ENCODE measurements at regions of chr17 and their contacts with region 1.

Region 1: DNA sequence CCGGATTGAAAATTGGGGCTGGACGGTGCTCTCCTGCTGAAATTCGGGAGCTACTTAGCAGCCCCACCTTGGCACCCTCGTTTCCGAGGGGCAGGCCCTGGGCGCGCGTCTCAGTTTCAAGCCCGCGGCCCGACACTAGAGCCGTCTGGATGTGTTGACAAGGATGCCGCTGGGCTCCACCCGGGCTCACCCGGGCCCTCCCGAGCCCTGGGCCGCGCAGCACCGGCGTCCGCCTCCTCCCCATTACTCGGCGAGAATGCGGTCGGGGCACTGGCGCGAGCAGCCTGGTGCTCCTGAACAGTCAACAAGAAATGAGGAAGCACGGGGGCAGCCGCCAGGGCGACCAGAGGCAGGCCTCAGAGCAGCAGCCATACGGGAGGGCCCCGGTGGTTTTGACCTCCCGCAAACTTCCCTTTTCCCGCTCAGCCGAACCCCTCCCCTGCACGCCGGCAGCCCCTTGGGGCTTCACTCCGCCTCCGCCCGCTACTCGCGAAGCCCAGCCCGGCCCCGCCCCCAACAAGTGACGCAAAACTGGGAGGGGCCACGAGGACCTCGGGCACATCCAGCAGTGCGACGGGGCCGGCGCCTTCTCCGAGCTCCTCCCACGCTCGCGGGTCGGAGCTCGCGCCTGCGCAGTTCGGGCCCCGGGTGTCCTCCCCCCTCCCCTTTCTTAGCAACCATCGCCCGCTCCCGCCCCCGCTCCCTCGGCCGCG is 447 bp upstream of the SEC14L1 start:
- DNase-seq: peak; percentile 99
- H3K4me3 Mint-ChIP-seq: peak overlapping the region; percentile 68
- H3K27ac Mint-ChIP-seq: peak overlapping the region; percentile 96
- H3K4me1 Mint-ChIP-seq: peaks cover 49% of the 10 kb centered on the region
- H3K27me3 Mint-ChIP-seq: no peaks in the 10 kb centered on the region

Region 2: GRCh38 chr17:76737082-76737675 is 403.1 kb before region 1 on chr17 and contains the start of gene SRSF2:
- intact Hi-C with region 1: loop called (anchors 2 kb)
- DNase-seq: peak; percentile 100
- H3K4me3 Mint-ChIP-seq: peak within 1 kb of the TSS; percentile 97
- H3K27ac Mint-ChIP-seq: peak within 1 kb of the TSS; percentile 97
- H3K4me1 Mint-ChIP-seq: peaks cover 34% of the 10 kb centered on the region
- H3K27me3 Mint-ChIP-seq: no peaks in the 10 kb centered on the region
- total RNA-seq, gene SRSF2: 456 and 478 TPM in 2 replicates

Region 3: DNA sequence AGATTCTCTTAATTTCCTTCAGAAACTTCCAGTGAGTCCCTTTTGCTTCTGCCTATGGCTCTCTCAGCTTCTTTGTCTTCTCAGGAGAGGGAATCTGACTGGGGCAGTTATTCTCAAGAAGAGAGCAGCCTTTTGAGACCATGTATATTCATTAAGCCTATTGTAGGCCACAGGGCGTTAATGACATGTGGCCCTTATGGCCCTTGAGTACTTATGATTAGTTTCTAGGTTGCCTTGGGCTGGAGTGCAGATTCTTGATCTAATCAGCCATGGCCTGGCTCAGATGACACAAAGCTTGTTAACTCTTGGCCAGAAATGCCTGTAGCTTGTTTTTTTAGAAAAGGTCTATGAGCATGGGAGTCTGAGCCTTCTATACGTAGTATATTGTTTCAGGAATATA is 385.0 kb before region 1 on chr17:
- intact Hi-C with region 1: no loop called
- DNase-seq: no peak
- H3K4me3 Mint-ChIP-seq: no peak overlapping the region
- H3K27ac Mint-ChIP-seq: no peak overlapping the region
- H3K4me1 Mint-ChIP-seq: peaks cover 19% of the 10 kb centered on the region
- H3K27me3 Mint-ChIP-seq: no peaks in the 10 kb centered on the region

Region 4: GRCh38 chr17:77088455-77089123 is 51.7 kb before region 1 on chr17:
- intact Hi-C with region 1: loop called (anchors 1 kb)
- DNase-seq: peak; percentile 80
- H3K4me3 Mint-ChIP-seq: peak overlapping the region; percentile 91
- H3K27ac Mint-ChIP-seq: peak overlapping the region; percentile 94
- H3K4me1 Mint-ChIP-seq: peaks cover 38% of the 10 kb centered on the region
- H3K27me3 Mint-ChIP-seq: peaks cover 2% of the 10 kb centered on the region

Region 5: DNA sequence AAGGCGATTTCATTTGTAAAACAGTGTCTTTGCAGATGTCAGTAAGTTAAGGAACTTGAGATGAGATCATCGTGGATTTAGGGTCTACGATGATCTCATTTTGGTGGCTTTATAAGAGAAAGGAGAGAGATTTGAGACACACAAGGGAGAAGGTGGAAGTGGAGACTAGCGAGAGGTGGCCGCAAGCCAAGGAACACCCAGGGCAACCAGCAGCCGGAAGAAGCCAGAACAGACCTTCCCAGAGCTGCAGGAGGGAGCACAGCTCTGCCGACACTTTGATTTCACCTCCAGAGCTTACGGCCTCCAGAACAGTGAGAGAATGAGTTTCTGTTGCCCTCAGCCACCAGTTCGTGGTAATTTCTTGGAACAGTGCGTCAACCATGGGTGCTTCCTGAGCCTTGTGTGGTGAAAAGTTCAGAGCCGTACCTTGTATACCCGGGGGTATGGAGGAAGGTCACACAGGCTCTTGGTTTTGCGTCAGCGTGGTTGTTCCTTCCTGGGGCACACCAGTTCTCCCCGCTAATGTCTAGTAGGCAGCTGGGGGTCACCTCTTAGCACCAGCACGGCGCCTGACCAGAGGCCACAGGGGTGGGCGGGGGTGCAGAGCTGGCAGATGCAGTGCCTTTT is 12.5 kb before region 1 on chr17:
- intact Hi-C with region 1: loop called (anchors 1 kb)
- DNase-seq: peak; percentile 72
- H3K4me3 Mint-ChIP-seq: peak overlapping the region; percentile 68
- H3K27ac Mint-ChIP-seq: peak overlapping the region; percentile 94
- H3K4me1 Mint-ChIP-seq: peaks cover 31% of the 10 kb centered on the region
- H3K27me3 Mint-ChIP-seq: no peaks in the 10 kb centered on the region

Region 6: GRCh38 chr17:77189148-77189547 is 48.8 kb after region 1 on chr17:
- intact Hi-C with region 1: loop called (anchors 1 kb)
- DNase-seq: no peak
- H3K4me3 Mint-ChIP-seq: peak overlapping the region; percentile 22
- H3K27ac Mint-ChIP-seq: peak overlapping the region; percentile 85
- H3K4me1 Mint-ChIP-seq: peaks cover 24% of the 10 kb centered on the region
- H3K27me3 Mint-ChIP-seq: no peaks in the 10 kb centered on the region

Region 7: GRCh38 chr17:77247048-77247541 is 106.8 kb after region 1 on chr17:
- intact Hi-C with region 1: loop called (anchors 5 kb)
- DNase-seq: peak; percentile 78
- H3K4me3 Mint-ChIP-seq: peak overlapping the region; percentile 45
- H3K27ac Mint-ChIP-seq: no peak overlapping the region
- H3K4me1 Mint-ChIP-seq: peaks cover 15% of the 10 kb centered on the region
- H3K27me3 Mint-ChIP-seq: peaks cover 22% of the 10 kb centered on the region

Region 8: DNA sequence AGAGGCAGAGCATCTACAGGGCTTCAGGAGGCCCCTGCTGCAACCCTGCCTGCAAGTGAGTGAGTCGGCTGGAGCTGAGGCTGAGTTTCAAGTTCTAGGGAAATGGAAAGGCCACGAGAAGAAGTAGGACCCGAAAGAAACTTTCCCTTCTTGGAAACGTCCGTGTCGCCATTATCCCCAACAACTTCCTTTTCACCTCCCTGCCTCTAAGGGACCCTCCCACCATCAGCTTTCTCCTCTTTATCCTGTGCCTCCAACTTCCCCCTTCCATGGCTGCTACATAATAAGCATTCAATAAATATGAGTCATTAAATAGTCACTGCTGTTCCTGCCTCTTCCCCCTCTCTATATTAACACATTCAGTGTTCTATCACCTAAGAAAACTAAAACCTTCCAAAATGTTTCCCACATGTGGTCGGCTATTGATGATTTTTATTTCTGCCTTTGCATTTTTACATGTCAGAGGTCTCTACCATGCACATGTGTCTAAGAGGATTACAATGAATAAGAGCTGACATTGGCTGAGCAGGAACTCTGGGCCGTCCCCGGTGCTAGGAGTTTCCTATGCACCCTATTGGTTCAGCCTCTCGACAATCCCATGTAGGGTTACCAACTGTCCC is 702.3 kb after region 1 on chr17:
- intact Hi-C with region 1: loop called (anchors 5 kb)
- DNase-seq: no peak
- H3K4me3 Mint-ChIP-seq: peak overlapping the region; percentile 2
- H3K27ac Mint-ChIP-seq: peak overlapping the region; percentile 76
- H3K4me1 Mint-ChIP-seq: peaks cover 44% of the 10 kb centered on the region
- H3K27me3 Mint-ChIP-seq: no peaks in the 10 kb centered on the region

Measured in activated T-helper 2 cell treated with anti-CD3 and anti-CD28 coated beads, Interferon-gamma antibody, Interleukin-2, Interleukin-4, amounts not matched to agents 10 μg/mL and 5 μg/mL and 100 μg/mL, durations not matched to agents 14 hours and 24 hours and 36 hours (primary cell).